ENCODE measurements at regions of chr11 and their contacts with region 1.

Region 1: DNA sequence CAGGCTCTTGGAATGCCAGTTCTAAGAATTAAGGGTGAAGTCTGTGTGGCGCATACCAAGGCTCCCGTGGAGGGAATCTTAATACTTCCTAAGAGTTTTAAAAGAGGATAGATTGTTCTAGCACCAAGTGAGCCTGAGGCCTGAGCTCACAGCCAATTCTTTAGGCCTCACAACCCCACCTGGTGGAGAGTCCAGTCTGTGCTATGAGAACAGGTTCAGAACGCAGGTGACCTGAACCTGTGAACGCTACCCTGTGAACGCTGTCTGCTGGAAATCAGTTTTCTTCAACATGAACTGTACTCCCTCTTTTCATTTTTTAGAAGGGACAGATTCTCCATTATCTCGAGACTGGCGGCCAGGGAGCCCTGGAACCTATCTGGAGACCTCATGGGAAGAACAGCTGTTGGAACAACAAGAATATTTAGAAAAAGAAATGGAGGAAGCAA is 43.2 kb upstream of the DLAT start:
- DNase-seq: peak; percentile 76
- H3K4me3 Mint-ChIP-seq: no peak overlapping the region
- H3K27ac Mint-ChIP-seq: no peak overlapping the region
- H3K4me1 Mint-ChIP-seq: peaks cover 6% of the 10 kb centered on the region
- H3K27me3 Mint-ChIP-seq: peaks cover 24% of the 10 kb centered on the region

Region 2: GRCh38 chr11:111878849-111879636 is 103.0 kb before region 1 on chr11 and contains the starts of genes CFAP68 and FDXACB1:
- CTCF ChIA-PET with region 1: interaction called, 16 read pairs
- DNase-seq: peak; percentile 97
- H3K4me3 Mint-ChIP-seq: peak within 1 kb of the TSS; percentile 83
- H3K27ac Mint-ChIP-seq: peak within 1 kb of the TSS; percentile 96
- H3K4me1 Mint-ChIP-seq: peaks cover 26% of the 10 kb centered on the region
- H3K27me3 Mint-ChIP-seq: no peaks in the 10 kb centered on the region

Region 3: DNA sequence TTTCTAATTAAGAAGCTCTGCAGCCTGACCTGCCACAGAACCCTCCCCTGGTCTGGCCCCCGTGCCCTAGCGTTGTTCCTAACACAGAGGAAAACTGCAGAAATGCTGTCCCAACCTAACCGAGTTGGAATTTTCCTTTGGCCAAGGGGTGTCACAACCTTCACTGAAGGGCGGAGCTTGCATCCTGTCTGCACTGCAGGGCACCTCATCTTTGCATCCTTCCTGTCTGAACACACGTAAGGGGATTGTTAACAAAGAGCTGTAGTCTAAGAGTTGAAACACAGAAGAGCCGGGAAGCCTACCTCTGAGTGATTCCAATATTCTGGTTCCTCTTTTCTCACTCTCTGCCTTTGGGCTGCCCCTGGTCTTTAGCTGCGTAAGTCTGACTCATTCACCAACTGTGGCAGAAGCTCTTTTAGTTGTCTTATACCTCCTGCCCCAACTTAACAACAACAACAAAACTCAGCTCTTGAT is 43.3 kb before region 1 on chr11:
- CTCF ChIA-PET with region 1: interaction called, 217 read pairs
- DNase-seq: peak; percentile 49
- H3K4me3 Mint-ChIP-seq: peak overlapping the region; percentile 80
- H3K27ac Mint-ChIP-seq: peak overlapping the region; percentile 80
- H3K4me1 Mint-ChIP-seq: peaks cover 45% of the 10 kb centered on the region
- H3K27me3 Mint-ChIP-seq: no peaks in the 10 kb centered on the region

Region 4: DNA sequence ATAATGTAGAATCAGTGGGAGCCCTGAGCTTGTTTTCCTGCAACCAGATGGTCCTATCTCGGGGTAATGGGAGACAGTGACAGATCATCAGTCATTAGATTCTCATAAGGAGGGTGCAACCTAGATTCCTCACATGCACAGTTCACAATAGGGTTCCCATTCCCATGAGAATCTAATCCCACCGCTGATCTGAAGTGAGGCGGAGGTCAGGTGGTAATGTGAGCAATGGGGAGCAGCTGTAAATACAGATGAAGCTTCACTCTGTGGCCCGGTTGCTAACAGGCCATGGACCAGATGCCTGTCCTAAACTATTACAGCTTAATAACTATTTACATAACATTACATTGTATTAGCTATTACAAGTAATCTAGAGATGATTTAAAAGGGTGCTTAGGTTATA is 27.9 kb before region 1 on chr11:
- CTCF ChIA-PET with region 1: interaction called, 12 read pairs
- DNase-seq: no peak
- H3K4me3 Mint-ChIP-seq: no peak overlapping the region
- H3K27ac Mint-ChIP-seq: no peak overlapping the region
- H3K4me1 Mint-ChIP-seq: peaks cover 4% of the 10 kb centered on the region
- H3K27me3 Mint-ChIP-seq: no peaks in the 10 kb centered on the region

Region 5: DNA sequence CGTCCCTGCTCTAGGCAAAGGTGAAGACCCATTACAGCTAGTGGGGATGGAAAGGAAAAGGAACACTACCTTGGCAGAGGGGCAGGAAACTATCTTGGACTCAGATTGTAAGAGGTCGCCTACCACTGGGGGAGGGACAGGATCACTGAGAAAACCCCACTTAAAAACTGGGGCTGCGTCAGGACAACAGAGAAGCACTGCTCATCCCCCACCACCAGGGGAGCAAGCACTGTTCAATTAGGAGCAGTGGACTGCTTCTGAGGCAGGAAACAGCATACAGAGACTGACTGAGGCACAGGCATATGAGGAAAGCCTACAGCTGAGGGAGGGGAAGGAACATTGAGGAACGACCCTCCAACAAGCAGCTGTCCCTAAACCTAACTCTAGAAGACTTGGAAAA is 22.3 kb after region 1 on chr11:
- CTCF ChIA-PET with region 1: interaction called, 12 read pairs
- DNase-seq: peak; percentile 44
- H3K4me3 Mint-ChIP-seq: no peak overlapping the region
- H3K27ac Mint-ChIP-seq: no peak overlapping the region
- H3K4me1 Mint-ChIP-seq: no peaks in the 10 kb centered on the region
- H3K27me3 Mint-ChIP-seq: peaks cover 17% of the 10 kb centered on the region

Measured in activated naive CD4-positive, alpha-beta T cell treated with anti-CD3 and anti-CD28 coated beads, Interleukin-2, amount 10 ng/mL, durations not matched to agents 7 days and 5 days (primary cell).